ENCODE measurements at regions of chr17 and their contacts with region 1.

Region 1: DNA sequence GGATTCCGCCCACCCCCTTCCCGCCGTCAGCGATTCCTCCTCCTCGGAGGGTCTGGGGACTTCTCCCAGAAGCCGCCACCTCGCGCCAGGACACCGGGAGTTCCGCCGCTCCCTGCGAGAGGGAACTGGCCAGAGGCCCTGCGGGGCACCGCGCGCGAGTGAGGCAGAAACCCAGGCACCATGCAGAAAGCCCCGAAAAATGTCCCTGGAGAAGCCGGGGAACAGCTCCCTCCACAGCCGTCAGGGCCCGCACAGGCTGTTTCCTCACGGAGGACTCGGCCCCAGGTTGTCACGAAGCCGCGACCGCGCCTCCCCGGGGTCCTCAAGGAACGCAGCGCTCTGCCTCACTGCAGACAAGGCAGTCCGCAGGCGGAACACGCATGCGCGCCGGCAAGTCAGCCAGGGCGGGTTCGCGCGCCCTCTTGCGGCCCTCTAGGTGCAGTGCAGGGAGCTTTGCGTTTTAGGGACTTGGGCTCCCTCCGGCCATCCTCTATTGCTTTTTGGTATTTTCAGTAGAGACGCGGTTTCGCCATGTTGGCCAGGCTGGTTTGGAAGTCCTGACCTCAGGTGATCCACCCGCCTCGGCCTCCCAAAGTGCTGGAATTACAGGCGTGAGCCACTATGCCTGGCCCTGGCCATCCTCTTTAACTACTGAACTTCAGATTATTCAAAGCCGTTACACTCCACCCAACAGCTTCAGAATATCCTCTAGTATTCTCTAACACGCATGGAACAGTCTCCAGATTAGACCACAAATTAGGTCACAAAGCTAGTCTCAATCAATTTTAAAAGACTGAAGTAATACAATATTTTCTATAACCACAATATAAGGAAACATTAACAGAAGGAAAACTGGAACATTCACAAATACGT is 20.3 kb upstream of the ZNF287 start:
- DNase-seq: peak; percentile 91
- H3K4me3 ChIP-seq: peak overlapping the region; percentile 72
- H3K27ac ChIP-seq: peak overlapping the region; percentile 75
- H3K4me1 ChIP-seq: peaks cover 13% of the 10 kb centered on the region
- H3K27me3 ChIP-seq: peaks cover 12% of the 10 kb centered on the region
- CTCF ChIP-seq: peak; percentile 100

Region 2: GRCh38 chr17:16189791-16190348 is 399.5 kb before region 1 on chr17:
- intact Hi-C with region 1: no loop called
- DNase-seq: no peak
- H3K4me3 ChIP-seq: no peak overlapping the region
- H3K27ac ChIP-seq: peak overlapping the region; percentile 58
- H3K4me1 ChIP-seq: peaks cover 42% of the 10 kb centered on the region
- H3K27me3 ChIP-seq: no peaks in the 10 kb centered on the region
- CTCF ChIP-seq: no peak

Region 3: GRCh38 chr17:16537130-16537458 is 52.2 kb before region 1 on chr17:
- intact Hi-C with region 1: loop called (anchors 5 kb)
- DNase-seq: no peak
- H3K4me3 ChIP-seq: no peak overlapping the region
- H3K27ac ChIP-seq: peak overlapping the region; percentile 95
- H3K4me1 ChIP-seq: peaks cover 9% of the 10 kb centered on the region
- H3K27me3 ChIP-seq: peaks cover 8% of the 10 kb centered on the region
- CTCF ChIP-seq: peak; percentile 4

Region 4: DNA sequence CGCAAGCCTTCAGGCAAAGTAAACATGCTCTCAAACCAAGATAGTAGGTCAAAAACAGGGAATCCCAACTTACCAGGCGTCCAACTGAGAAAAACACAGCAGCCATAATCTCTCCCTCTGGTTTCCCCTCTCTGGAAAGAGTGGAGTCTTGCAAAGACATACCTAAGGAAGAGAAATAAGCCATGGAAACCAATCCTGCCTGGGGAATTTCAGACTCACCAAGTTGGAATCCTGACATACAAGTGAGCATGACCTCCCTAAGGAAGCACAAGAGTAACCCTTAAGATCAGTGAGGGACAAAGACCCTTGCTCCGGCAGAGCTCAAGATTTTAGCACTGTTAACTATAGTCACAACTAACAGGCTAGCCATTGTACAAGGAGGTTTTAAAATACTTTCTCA is 60.3 kb after region 1 on chr17:
- intact Hi-C with region 1: loop called (anchors 10 kb)
- DNase-seq: no peak
- H3K4me3 ChIP-seq: no peak overlapping the region
- H3K27ac ChIP-seq: no peak overlapping the region
- H3K4me1 ChIP-seq: peaks cover 19% of the 10 kb centered on the region
- H3K27me3 ChIP-seq: no peaks in the 10 kb centered on the region
- CTCF ChIP-seq: no peak